ENCODE measurements at regions of chr11 and their contacts with region 1.

Region 1: GRCh38 chr11:118592616-118593367 is 14.6 kb upstream of the PHLDB1 start:
- DNase-seq: no peak
- H3K4me3 Mint-ChIP-seq: no peak overlapping the region
- H3K27ac Mint-ChIP-seq: no peak overlapping the region
- H3K4me1 Mint-ChIP-seq: peaks cover 14% of the 10 kb centered on the region
- H3K27me3 Mint-ChIP-seq: no peaks in the 10 kb centered on the region

Region 2: DNA sequence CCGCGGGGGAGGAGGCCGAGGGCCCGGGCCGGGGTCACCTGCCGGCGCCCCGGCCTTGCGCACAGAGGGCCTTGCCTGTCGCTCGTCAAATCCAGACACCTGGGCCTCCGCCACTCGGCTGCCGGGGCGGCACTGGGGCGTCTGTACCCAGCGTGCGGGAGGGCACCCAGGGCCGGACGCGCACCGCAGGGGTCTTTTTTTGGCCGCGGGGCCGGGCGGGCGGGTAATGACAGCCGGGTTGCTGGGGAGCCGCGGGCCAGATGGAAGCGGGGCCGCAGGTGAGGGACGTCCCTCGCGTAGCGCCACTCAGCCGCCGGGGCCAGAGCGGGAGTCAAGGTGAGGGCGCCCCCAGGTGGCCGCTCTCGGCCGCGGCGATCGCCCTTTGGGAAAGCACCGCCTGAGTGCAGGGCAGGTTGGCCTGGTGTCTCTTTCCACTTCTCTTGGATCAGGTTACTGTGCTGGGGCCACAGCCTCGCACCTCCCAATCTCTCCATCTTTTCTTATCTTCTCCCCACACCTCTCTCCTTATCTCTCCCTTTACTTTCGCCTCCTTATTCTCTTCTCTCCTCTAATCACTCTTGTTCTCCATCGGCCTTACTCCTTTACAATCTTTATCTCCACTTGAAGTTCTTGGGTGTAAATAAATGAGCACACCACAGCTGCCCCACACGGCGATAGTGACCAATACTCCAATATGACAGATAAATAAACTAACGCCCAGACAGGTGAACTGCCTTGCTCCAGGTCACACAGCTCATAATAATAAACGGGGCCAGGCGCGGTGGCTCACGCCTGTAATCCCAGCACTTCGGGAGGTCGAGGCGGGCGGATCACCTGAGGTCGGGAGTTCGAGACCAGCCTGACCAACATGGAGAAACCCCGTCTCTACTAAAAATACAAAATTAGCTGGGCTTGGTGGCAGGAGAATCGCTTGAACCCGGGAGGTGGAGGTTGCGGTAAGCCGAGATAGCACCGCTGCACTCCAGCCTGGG is 18.3 kb after region 1 on chr11:
- CTCF ChIA-PET with region 1: interaction called, 137 read pairs
- POLR2A ChIA-PET with region 1: interaction called, 4 read pairs
- intact Hi-C with region 1: loop called (anchors 1 kb)
- DNase-seq: peak; percentile 90
- H3K4me3 Mint-ChIP-seq: peak overlapping the region; percentile 14
- H3K27ac Mint-ChIP-seq: no peak overlapping the region
- H3K4me1 Mint-ChIP-seq: peaks cover 22% of the 10 kb centered on the region
- H3K27me3 Mint-ChIP-seq: peaks cover 12% of the 10 kb centered on the region

Region 3: GRCh38 chr11:118659314-118659952 is 66.6 kb after region 1 on chr11:
- CTCF ChIA-PET with region 1: interaction called, 8 read pairs
- POLR2A ChIA-PET with region 1: no interaction called
- intact Hi-C with region 1: loop called (anchors 1 kb)
- DNase-seq: peak; percentile 94
- H3K4me3 Mint-ChIP-seq: no peak overlapping the region
- H3K27ac Mint-ChIP-seq: no peak overlapping the region
- H3K4me1 Mint-ChIP-seq: peaks cover 2% of the 10 kb centered on the region
- H3K27me3 Mint-ChIP-seq: no peaks in the 10 kb centered on the region